PC-9 (cell line): ENCODE measurements at regions of chr2 and their contacts with region 1.

Region 1: DNA sequence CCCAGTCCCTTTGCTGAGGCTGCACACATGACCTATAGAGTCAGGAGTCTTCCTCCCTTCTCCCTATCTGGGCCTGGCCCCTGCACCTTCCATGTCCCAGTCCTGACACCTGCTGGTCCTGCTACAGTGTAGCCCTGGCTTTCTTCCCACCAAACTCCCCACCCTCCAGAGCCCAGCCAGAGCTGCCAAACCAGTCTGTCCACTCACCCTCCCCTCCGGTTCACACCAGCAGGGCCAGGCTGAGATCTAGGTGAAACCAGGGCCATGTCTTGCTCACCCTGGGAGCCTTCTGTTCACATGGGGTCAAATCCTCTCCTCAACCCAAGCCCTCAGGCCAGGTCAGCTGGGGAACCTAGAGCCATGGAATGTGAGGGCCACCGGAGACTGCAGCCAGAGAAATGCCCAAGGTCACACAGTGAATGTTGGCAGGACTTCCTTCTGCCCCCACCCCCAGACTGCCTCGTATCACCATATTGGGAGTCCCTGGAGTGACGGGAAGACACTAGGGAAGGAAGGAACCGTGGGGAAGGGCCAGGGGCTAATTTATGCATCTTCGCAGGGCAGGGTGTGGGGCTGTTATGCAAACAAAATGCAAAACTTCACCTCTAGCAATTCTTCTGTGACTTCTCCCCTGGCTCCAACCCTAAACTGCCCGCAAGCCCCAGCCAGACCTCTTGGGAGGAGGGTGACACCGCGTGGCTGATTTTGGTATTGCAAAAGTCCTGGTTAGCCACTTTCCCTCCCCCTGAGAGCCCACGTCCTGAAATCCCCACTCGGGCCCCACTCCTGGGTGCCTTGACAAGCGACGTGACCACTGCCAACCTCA is 14.6 kb downstream of the TNS1 start:
- DNase-seq: peak; percentile 90 to 93
- H3K4me3 ChIP-seq: no peak overlapping the region; the same call in 1 of the 2 replicates
- H3K27ac ChIP-seq: peak overlapping the region; percentile 79
- H3K4me1 ChIP-seq: peaks cover 18% of the 10 kb centered on the region
- H3K27me3 ChIP-seq: no peaks in the 10 kb centered on the region
- CTCF ChIP-seq: peak; percentile 86

Region 2: GRCh38 chr2:217822296-217823252 is 165.7 kb before region 1 on chr2:
- CTCF ChIA-PET with region 1: no interaction called
- POLR2A ChIA-PET with region 1: interaction called, 14 read pairs
- intact Hi-C with region 1: no loop called
- DNase-seq: peak in 1 of 2 experiments; percentile 13
- H3K4me3 ChIP-seq: no peak overlapping the region
- H3K27ac ChIP-seq: no peak overlapping the region
- H3K4me1 ChIP-seq: no peaks in the 10 kb centered on the region
- H3K27me3 ChIP-seq: peaks cover 18% of the 10 kb centered on the region; the same call in 1 of the 2 replicates
- CTCF ChIP-seq: no peak

Region 3: DNA sequence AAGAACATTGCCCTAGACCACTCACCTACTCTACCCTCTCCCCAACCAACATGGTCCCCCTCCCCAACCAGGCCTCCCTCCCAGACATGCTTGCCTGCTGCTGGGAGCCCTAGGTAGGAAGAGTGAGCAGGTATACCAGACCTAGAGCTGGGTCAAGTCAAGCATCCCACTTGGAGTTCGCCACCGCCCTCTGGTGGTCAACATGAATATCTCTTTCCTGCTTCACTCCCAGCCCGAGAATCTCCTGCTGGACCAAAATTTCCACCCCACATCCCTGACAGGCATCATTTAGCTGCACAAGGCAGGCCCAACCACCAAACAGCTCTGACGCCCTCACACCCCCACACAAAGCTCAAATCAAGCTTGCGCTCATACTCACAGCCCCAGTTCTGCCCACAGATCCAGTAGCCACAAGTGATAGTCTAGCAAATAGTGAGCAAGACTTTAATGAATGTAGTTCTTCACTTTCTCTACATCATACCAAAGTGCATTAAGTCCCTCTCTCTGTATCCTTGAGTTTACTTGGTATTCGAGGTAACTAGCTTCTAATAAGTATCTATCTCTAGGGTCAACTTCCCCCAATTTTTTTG is 101.4 kb before region 1 on chr2:
- CTCF ChIA-PET with region 1: no interaction called
- POLR2A ChIA-PET with region 1: no interaction called
- intact Hi-C with region 1: loop called (anchors 1 kb)
- DNase-seq: peak; percentile 29 to 60
- H3K4me3 ChIP-seq: no peak overlapping the region
- H3K27ac ChIP-seq: no peak overlapping the region
- H3K4me1 ChIP-seq: no peaks in the 10 kb centered on the region
- H3K27me3 ChIP-seq: no peaks in the 10 kb centered on the region
- CTCF ChIP-seq: peak; percentile 89

Region 4: GRCh38 chr2:217943446-217944389 is 44.5 kb before region 1 on chr2:
- CTCF ChIA-PET with region 1: interaction called, 3 read pairs
- POLR2A ChIA-PET with region 1: no interaction called
- intact Hi-C with region 1: loop called (anchors 1 kb)
- DNase-seq: peak; percentile 37 to 70
- H3K4me3 ChIP-seq: no peak overlapping the region; the same call in 1 of the 2 replicates
- H3K27ac ChIP-seq: no peak overlapping the region
- H3K4me1 ChIP-seq: no peaks in the 10 kb centered on the region
- H3K27me3 ChIP-seq: no peaks in the 10 kb centered on the region; the same call in 1 of the 2 replicates
- CTCF ChIP-seq: no peak

Region 5: GRCh38 chr2:217964275-217965161 is 23.7 kb before region 1 on chr2:
- CTCF ChIA-PET with region 1: no interaction called
- POLR2A ChIA-PET with region 1: no interaction called
- intact Hi-C with region 1: no loop called
- DNase-seq: no peak
- H3K4me3 ChIP-seq: no peak overlapping the region
- H3K27ac ChIP-seq: no peak overlapping the region
- H3K4me1 ChIP-seq: no peaks in the 10 kb centered on the region
- H3K27me3 ChIP-seq: no peaks in the 10 kb centered on the region
- CTCF ChIP-seq: no peak

Region 6: DNA sequence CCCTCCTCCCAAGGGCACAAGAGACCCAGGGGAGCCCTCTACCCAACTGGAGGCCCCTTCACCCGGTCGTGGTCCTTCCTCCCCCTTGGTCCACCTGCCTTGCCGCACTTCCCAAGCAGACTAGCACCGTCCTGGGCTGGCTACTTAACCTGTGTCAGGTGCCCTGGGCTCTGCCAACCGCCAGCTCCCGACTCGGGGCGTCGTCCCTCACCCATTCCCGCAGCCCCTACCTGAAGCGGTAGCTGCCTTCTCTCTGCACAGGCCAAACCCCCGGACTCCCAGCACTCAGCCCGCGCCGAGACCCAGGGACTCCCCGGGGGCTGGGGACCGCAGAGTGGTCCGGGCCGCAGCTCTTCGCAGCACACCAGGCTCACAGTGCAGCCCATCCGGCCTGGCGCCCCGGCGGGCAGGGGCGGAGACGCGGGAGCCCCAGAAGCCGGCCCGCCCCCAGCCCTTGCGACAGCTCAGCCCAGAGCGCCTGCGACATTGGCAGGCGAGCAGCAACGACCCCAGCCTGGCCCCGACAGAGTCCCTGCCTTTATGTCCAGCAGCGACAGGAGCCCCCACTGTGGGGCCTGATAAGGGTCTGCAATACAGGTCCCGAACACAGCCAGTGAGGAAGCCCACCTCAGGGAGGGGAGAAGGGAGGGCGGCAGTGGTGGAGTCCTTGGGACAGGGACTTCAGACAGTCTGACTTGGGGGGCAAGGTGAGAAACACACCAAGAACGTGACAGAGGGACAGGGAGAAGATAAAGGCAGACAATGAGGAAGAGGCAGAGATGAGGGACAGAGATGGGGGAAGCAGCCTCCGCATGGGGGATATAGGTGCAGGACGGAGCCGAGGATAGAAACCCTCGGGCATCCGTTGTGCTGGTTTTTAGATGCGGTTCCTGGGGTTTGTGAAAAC is 45.6 kb after region 1 on chr2:
- CTCF ChIA-PET with region 1: interaction called, 13 read pairs
- POLR2A ChIA-PET with region 1: no interaction called
- intact Hi-C with region 1: loop called (anchors 1 kb)
- DNase-seq: no peak
- H3K4me3 ChIP-seq: no peak overlapping the region
- H3K27ac ChIP-seq: no peak overlapping the region
- H3K4me1 ChIP-seq: no peaks in the 10 kb centered on the region
- H3K27me3 ChIP-seq: peaks cover 37% of the 10 kb centered on the region
- CTCF ChIP-seq: no peak